ENCODE measurements at regions of chr14 and their contacts with region 1.

Region 1: DNA sequence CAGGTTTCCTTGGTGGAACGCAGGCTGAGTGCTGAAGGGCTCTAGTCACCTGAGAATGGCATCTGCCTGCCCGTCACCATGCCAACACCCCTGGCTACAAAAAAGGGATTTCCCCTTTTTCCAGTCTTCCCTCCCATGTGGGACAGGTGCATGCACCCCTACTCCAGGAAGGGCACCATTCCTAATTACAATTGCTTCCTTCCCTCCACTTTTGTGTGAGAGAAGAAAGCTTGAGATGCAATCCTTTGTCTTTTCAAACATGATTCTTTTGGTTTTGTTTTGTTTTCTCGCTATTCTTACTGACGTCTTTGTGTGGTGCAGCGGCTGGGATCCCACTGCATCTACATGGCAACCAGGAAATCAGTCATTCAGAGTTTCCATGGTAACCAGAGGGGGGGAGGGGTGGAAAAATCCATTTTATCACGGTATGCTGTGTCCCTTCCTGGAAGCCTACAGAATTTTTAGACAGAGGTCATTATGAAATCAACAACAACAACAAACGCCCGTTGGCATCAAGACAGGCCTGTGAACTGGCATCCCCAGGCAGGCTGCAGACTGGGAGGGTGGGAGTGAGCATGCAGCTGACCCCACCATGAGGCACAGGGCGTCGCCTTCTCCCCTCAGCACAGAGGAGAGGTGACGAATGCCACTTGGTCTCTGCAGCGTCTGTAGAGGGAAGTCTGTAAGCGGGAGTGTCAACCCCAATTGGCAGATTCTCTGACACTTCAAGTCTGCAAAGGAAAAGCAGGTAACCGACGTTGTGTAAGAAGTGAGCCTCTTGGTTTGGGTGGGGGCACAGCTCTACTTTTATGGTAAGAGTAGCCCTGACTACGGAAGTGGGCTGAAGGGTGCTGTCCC is 13.6 kb upstream of the GNG2 start:
- DNase-seq: peak; percentile 67
- ATAC-seq: peak; percentile 78
- H3K4me3 Mint-ChIP-seq: peak overlapping the region; percentile 88
- H3K27ac Mint-ChIP-seq: peak overlapping the region; percentile 99
- H3K4me1 Mint-ChIP-seq: peaks cover 86% of the 10 kb centered on the region
- H3K27me3 Mint-ChIP-seq: no peaks in the 10 kb centered on the region
- CTCF ChIP-seq: no peak

Region 2: DNA sequence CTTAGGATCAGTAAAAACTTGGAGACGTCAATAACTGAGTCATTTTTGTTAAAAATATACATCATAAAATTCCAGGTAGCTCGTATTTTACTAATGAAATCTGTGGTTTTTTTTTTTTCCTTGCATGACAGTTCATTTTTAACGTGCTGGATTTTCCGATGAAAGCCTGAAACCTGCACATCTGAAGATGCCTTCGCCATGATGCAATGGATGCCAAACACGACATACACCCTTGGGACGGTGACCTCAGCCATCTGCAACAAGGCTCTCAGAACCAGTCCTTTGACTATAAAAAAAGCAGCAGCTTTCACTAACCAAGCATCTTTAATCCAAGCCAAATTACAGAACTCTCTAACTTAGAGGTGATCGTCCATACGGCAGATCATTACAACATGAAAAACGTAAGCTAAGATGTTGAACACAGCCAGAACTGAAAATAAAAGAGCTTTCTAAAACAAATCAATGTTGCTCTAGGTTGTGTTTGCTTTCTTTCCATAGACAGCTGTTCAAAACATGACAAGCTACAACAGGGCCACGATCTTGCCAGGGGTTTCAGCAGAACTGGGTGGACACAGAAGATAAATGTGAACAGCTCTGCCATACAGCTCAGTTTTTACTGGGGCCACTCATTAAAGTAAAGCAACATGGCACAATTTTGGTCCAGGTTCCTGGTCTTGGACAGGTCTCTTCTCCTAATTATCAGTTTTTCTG is 1023.7 kb before region 1 on chr14:
- CTCF ChIA-PET with region 1: no interaction called
- POLR2A ChIA-PET with region 1: no interaction called
- intact Hi-C with region 1: loop called (anchors 5 kb)
- DNase-seq: no peak
- ATAC-seq: peak; percentile 32
- H3K4me3 Mint-ChIP-seq: peak overlapping the region; percentile 81
- H3K27ac Mint-ChIP-seq: peak overlapping the region; percentile 97
- H3K4me1 Mint-ChIP-seq: peaks cover 95% of the 10 kb centered on the region
- H3K27me3 Mint-ChIP-seq: no peaks in the 10 kb centered on the region
- CTCF ChIP-seq: no peak

Region 3: DNA sequence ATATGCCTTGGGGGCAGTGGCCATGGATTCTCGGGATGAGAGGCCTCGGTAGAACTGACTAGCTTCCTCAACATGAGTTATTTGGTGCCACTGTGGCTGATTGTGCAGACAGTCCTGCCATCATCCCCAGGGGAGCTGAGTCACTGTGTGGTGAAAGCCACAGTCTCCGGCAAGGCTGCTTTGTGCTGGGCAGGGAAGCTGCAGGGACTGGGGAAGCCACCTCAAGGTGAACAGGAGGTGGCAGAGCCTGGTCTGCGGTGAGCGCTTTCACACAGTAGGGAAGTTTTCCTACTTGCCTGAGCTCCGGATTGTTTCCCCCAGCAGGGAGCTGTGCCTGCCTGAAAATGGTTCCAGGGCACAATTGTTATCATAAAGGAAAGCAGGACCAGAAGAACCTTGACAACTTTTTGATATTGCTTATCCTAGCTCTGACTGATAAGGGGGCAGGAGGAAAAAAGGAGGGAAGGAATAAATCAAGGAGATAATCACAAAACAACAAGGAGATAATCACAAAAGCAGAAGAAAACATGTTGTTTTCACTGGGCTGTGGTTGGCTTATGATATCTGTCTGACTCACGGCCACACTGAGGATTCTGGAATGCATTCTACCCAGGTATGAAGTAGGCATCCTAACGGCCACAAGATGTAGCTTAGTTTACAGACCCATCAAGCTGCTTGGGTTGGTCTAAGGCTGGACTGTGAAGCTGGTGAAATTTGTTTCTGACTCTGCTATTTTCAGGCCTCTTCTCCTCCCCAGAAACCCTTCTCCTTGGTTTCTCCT is 18.7 kb before region 1 on chr14:
- CTCF ChIA-PET with region 1: interaction called, 3 read pairs
- POLR2A ChIA-PET with region 1: interaction called, 13 read pairs
- intact Hi-C with region 1: loop called (anchors 1 kb)
- DNase-seq: peak; percentile 64
- ATAC-seq: peak; percentile 99
- H3K4me3 Mint-ChIP-seq: no peak overlapping the region
- H3K27ac Mint-ChIP-seq: peak overlapping the region; percentile 6
- H3K4me1 Mint-ChIP-seq: no peaks in the 10 kb centered on the region
- H3K27me3 Mint-ChIP-seq: no peaks in the 10 kb centered on the region
- CTCF ChIP-seq: no peak

Region 4: GRCh38 chr14:51873221-51873893 is 26.5 kb after region 1 on chr14:
- CTCF ChIA-PET with region 1: interaction called, 3 read pairs
- POLR2A ChIA-PET with region 1: interaction called, 143 read pairs
- intact Hi-C with region 1: loop called (anchors 1 kb)
- DNase-seq: no peak
- ATAC-seq: peak; percentile 79
- H3K4me3 Mint-ChIP-seq: peak overlapping the region; percentile 50
- H3K27ac Mint-ChIP-seq: peak overlapping the region; percentile 89
- H3K4me1 Mint-ChIP-seq: peaks cover 56% of the 10 kb centered on the region
- H3K27me3 Mint-ChIP-seq: no peaks in the 10 kb centered on the region
- CTCF ChIP-seq: no peak

Region 5: DNA sequence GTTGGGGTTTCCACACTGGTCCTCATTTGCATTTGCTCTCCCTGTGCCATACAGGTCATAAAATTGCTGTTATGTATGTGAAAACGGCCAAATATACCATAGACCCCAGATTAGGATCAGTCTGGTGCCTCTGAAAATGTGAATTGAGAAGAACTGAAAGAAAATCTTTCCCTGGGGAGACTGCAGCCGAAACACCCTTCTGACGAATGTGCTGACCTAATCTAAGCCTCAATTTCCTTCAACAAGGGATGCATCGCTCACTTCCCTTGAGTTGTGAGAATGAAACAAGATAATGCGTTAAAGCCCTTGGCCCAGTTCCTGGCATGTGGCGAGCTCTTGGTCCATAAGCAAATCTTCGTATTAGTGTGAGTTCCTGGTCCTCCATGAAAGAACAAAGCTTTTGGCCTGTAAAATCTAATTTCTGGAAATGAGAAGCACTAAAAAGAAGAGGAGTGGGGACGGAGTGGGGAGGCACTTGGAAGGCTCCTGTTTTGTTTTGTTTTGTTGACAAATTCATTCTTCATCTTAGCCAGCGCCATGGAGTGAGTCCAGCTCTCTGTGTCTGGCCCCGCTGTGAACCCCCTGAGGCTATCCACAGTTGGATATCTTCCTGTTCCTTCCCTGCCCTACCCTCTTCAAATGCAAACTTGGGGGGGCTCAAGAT is 93.0 kb after region 1 on chr14:
- CTCF ChIA-PET with region 1: no interaction called
- POLR2A ChIA-PET with region 1: interaction called, 3 read pairs
- intact Hi-C with region 1: loop called (anchors 1 kb)
- DNase-seq: no peak
- ATAC-seq: peak; percentile 85
- H3K4me3 Mint-ChIP-seq: peak overlapping the region; percentile 54
- H3K27ac Mint-ChIP-seq: peak overlapping the region; percentile 85
- H3K4me1 Mint-ChIP-seq: peaks cover 31% of the 10 kb centered on the region
- H3K27me3 Mint-ChIP-seq: no peaks in the 10 kb centered on the region
- CTCF ChIP-seq: no peak

Region 6: DNA sequence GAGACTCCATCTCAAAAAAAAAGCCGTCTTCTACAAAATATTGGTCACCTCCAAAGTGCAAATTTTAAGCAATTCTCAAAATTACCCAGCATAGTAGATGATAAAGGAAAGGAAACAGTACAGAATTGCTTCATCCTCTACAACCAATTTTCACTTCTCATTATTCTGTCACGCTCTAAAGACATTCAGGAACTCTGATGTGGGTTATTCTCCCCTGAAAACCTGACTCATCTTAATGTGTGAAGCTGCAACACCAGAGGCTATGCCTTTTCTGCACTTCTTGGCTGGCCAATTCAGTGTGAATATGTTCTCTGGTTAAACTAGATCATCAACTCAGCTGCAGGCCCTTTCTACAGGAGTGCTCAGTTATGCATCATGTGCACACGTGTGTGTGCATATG is 478.3 kb after region 1 on chr14:
- CTCF ChIA-PET with region 1: no interaction called
- POLR2A ChIA-PET with region 1: no interaction called
- intact Hi-C with region 1: loop called (anchors 10 kb)
- DNase-seq: no peak
- ATAC-seq: peak; percentile 96
- H3K4me3 Mint-ChIP-seq: peak overlapping the region; percentile 33
- H3K27ac Mint-ChIP-seq: peak overlapping the region; percentile 32
- H3K4me1 Mint-ChIP-seq: peaks cover 28% of the 10 kb centered on the region
- H3K27me3 Mint-ChIP-seq: peaks cover 16% of the 10 kb centered on the region
- CTCF ChIP-seq: no peak